Prostate gland (tissue), 2 donors: ENCODE measurements at regions of chr10 and their contacts with region 1.

Region 1: DNA sequence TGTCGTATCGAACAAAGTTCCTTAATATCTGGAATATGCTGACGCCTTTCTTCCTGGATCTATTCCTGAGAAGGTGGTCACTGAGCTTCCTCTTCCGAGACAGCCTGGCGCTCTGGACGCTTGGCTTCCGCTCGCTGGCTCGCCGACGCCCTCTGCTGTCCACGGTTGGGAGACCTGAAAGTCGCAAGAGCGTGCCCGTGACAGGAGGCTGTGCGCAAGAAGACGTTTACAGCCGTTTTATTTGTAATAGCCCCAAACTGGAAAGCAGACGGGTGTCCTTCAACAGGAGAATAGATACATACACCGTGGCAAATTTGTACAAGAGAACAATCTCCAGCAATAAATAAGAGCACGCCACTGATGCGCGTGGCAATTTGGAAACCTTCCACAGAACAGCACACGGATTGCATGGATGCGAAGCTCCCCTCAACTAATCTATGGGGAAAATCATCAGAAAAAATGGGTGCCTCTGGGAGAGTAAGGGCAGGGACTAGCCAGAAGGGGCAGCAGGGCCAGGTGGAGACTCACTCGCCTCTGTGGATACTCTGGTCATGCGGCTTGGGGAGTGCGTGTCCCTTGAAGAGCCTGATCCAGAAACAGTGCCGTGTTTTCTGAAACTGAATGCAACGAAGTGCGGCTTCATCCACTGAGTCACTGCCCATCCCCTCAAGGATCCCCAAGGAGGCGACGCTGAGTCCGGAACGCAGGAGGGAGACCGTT is 41.5 kb upstream of the BNIP3 start:
- DNase-seq: peak; percentile 76
- H3K4me3 ChIP-seq: peak overlapping the region; percentile 12 to 26
- H3K27ac ChIP-seq: no peak overlapping the region
- H3K4me1 ChIP-seq: no peaks in the 10 kb centered on the region
- H3K27me3 ChIP-seq: no peaks in the 10 kb centered on the region
- CTCF ChIP-seq: peak; percentile 81 to 95 (median 92)
- POLR2A ChIP-seq: no peak

Region 2: GRCh38 chr10:131496351-131497052 is 526.8 kb before region 1 on chr10:
- intact Hi-C with region 1: no loop called
- DNase-seq: no peak
- H3K4me3 ChIP-seq: no peak overlapping the region
- H3K27ac ChIP-seq: no peak overlapping the region
- H3K4me1 ChIP-seq: no peaks in the 10 kb centered on the region
- H3K27me3 ChIP-seq: no peaks in the 10 kb centered on the region
- CTCF ChIP-seq: no peak
- POLR2A ChIP-seq: no peak

Region 3: DNA sequence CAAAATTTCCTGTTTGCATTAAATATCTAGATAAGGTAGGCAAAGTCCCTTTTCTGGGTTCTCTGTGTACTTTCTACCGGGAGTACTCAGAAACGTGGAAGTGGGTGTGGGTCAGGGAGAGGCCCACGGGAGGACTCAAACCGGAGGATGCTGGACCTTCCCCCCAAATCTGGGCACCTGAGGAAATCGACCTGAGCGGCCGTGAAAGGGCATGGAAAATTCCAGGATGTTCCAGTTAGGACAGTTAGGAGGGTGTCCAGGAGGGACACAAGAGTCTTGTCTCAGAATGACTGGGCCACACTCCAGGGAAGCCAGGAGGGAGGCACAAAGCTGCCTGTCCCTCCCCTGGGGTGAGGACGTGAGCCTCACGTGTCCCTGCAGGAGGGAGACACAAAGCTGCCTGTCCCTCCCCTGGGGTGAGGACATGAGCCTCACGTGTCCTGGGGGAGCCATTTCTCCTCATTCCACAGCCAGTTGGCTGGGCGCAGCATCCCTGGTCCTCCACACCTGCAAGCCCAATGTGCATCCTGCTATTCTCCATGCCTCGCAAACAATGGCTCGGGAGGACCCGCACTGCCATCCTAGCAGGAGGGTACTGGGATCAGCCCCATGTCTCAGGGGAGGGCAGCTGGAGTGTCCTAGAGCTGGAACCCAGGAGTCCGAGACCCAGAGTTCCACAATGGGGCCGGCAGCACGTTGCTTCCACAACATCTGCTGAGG is 312.9 kb before region 1 on chr10:
- intact Hi-C with region 1: no loop called
- DNase-seq: no peak
- H3K4me3 ChIP-seq: no peak overlapping the region
- H3K27ac ChIP-seq: no peak overlapping the region
- H3K4me1 ChIP-seq: no peaks in the 10 kb centered on the region
- H3K27me3 ChIP-seq: no peaks in the 10 kb centered on the region
- CTCF ChIP-seq: no peak
- POLR2A ChIP-seq: no peak

Region 4: GRCh38 chr10:131885391-131886161 is 137.7 kb before region 1 on chr10:
- intact Hi-C with region 1: loop called (anchors 2 kb)
- DNase-seq: peak; percentile 72
- H3K4me3 ChIP-seq: no peak overlapping the region
- H3K27ac ChIP-seq: peak overlapping the region in 1 of 2 donors; percentile 24
- H3K4me1 ChIP-seq: peaks cover 8% of the 10 kb centered on the region
- H3K27me3 ChIP-seq: no peaks in the 10 kb centered on the region
- CTCF ChIP-seq: peak; percentile 93 to 98 (median 98)
- POLR2A ChIP-seq: no peak

Region 5: GRCh38 chr10:132407814-132408278 is 384.6 kb after region 1 on chr10:
- intact Hi-C with region 1: no loop called
- DNase-seq: peak; percentile 94
- H3K4me3 ChIP-seq: peak overlapping the region; percentile 1 to 7
- H3K27ac ChIP-seq: peak overlapping the region; percentile 95 to 98
- H3K4me1 ChIP-seq: peaks cover 54% of the 10 kb centered on the region
- H3K27me3 ChIP-seq: no peaks in the 10 kb centered on the region
- CTCF ChIP-seq: peak in 2 of 4 experiments; percentile 33 to 35
- POLR2A ChIP-seq: peak; percentile 64